ENCODE measurements at regions of chr19 and their contacts with region 1.

Region 1: DNA sequence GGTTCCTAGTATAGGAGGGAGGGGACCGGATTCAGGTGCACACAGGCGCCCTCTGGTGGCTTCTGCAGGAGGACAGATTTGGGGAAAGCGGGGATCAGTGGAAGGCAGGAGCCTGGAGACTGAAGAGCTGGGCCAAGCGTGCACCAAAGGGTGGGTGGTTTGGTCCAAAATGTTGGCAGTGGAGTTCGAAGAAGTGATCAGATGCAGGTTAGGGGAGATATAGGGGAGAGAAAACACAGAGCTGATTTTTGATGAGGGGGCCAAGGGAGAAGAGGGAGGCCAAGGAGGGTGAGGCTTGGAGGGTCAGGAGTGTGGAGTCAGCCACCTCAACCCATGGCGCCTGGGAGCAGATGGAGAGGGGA is 6.8 kb upstream of the CARM1 start:
- DNase-seq: peak; percentile 70 to 91 (median 77)
- ATAC-seq: peak; percentile 97
- H3K4me3 ChIP-seq: no peak overlapping the region
- H3K4me3 Mint-ChIP-seq: no peak overlapping the region
- H3K27ac ChIP-seq: no peak overlapping the region
- H3K27ac Mint-ChIP-seq: peak overlapping the region; percentile 0
- H3K4me1 ChIP-seq: peaks cover 11% of the 10 kb centered on the region
- H3K4me1 Mint-ChIP-seq: peaks cover 7% of the 10 kb centered on the region
- H3K27me3 ChIP-seq: no peaks in the 10 kb centered on the region
- H3K27me3 Mint-ChIP-seq: no peaks in the 10 kb centered on the region
- CTCF ChIP-seq: peak; percentile 96

Region 2: DNA sequence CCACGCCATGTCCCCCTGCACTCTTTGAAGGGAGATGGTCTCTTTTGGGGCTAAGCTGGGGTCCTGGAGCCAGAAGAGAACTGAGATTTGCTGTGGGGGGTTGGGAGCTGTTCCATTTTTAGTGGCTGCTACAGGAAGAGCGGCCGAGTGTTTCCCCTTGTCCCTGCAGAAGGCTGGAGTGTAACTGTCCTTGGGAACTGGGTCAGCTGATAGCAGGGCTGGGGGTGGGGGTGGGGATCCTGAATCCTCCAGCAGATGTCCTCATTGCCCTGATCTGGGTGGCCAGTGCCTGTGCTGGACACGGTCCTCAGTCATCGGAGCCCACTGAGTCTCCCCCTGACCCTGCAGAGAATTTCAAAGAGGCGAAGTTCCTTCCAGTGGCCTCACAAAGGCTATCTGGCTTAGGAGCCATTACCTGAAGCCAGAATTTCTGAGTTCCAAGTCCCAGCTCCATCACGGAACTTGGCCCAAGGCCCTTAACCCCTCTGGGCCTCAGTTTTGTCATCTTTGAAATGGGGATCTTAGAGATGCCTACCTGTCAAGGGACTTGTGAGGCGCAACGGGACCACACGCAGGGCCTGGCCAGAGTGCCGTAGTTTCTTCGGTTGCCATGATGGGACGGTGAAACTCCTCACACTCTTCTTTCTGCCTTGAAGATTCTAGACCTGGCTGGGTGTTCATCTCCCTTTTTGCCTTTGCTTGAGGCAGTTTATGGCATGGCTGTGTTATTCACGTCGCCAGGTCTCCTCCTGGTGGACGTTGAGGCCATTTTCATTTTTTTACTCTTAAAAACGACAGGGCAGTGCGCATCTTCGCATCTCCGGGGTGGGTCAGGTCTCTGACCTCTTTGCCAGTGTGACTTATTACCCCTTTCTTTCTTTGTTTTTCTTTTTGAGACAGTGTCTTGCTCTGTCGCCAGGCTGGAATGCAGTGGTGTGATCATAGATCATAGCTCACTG is 94.7 kb before region 1 on chr19:
- CTCF ChIA-PET with region 1: no interaction called
- POLR2A ChIA-PET with region 1: no interaction called
- intact Hi-C with region 1: loop called in 1 of 2 experiments (anchors 5 kb)
- DNase-seq: peak in 8 of 14 experiments; percentile 16 to 68 (median 34)
- ATAC-seq: peak; percentile 72
- H3K4me3 ChIP-seq: no peak overlapping the region
- H3K4me3 Mint-ChIP-seq: no peak overlapping the region
- H3K27ac ChIP-seq: peak overlapping the region in 1 of 2 donors; percentile 2
- H3K27ac Mint-ChIP-seq: peak overlapping the region; percentile 75
- H3K4me1 ChIP-seq: peaks cover 41% of the 10 kb centered on the region
- H3K4me1 Mint-ChIP-seq: peaks cover 40% of the 10 kb centered on the region
- H3K27me3 ChIP-seq: no peaks in the 10 kb centered on the region
- H3K27me3 Mint-ChIP-seq: no peaks in the 10 kb centered on the region
- CTCF ChIP-seq: peak; percentile 41

Region 3: GRCh38 chr19:11766597-11767591 is 902.4 kb after region 1 on chr19 and contains the start of gene ZNF441:
- CTCF ChIA-PET with region 1: no interaction called
- POLR2A ChIA-PET with region 1: no interaction called
- intact Hi-C with region 1: no loop called
- DNase-seq: peak; percentile 80 to 95 (median 90)
- ATAC-seq: peak; percentile 93
- H3K4me3 ChIP-seq: peak within 1 kb of the TSS; percentile 70
- H3K4me3 Mint-ChIP-seq: peak within 1 kb of the TSS; percentile 98
- H3K27ac ChIP-seq: peak within 1 kb of the TSS; percentile 63 to 65
- H3K27ac Mint-ChIP-seq: peak within 1 kb of the TSS; percentile 88
- H3K4me1 ChIP-seq: peaks cover 23% of the 10 kb centered on the region
- H3K4me1 Mint-ChIP-seq: peaks cover 23% of the 10 kb centered on the region
- H3K27me3 ChIP-seq: no peaks in the 10 kb centered on the region
- H3K27me3 Mint-ChIP-seq: peaks cover 15% of the 10 kb centered on the region
- CTCF ChIP-seq: no peak
- total RNA-seq, gene ZNF441: 2.6 to 4.1 TPM